ENCODE measurements at regions of chr6 and their contacts with region 1.

Region 1: DNA sequence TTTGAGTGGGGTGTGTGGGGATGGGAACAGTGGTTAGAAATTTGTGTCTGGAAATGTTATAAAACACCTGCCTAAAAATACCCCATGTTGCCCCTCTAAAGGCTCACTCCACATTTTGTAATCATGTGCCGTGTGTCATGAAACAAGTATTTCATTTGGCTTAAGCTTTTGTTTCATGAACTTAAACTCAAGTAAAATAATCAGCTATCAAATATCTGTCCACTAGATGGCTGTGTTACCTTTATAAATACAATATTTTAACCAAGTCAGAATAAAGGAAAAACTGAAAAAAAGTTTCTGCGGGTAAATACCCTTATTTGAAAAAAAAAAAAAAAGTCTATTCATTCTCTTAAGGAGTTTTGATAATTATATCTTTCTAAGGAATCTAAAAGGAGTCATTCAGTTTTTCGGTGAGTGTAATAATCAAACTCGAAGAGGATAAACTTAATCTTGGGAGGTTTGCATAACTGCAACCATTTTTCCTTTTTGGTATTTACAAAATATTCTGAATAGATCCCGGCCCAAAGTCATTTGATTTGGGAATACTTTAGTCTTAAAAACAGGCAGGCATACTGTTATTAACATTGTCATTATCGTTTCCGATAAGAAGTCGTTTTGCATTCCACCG is 29.9 kb upstream of the MTRF1L start:
- DNase-seq: no peak
- H3K4me3 ChIP-seq: no peak overlapping the region
- H3K27ac ChIP-seq: no peak overlapping the region
- H3K4me1 ChIP-seq: no peaks in the 10 kb centered on the region
- H3K27me3 ChIP-seq: no peaks in the 10 kb centered on the region
- CTCF ChIP-seq: peak in 5 of 6 experiments; percentile 17 to 54 (median 36)
- POLR2A ChIP-seq: no peak

Region 2: DNA sequence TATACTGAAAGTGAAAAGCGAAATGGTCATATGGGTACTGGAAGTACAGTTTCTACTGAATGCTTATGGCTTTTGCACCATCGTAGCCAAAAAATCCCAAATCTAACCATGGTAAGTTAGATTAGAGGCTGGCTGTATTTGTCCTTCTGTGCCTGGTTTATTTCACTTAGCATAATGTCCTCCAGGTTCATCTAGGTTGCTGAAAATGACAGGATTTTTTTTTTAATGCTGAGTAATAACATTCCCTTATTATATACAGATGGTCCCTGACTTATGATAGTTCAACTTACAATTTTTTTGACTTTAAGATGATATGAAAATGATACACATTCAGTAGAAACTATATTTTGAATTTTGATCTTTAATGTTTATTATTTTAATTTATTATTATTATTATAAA is 327.0 kb before region 1 on chr6:
- intact Hi-C with region 1: no loop called
- DNase-seq: no peak
- H3K4me3 ChIP-seq: no peak overlapping the region
- H3K27ac ChIP-seq: no peak overlapping the region
- H3K4me1 ChIP-seq: no peaks in the 10 kb centered on the region
- H3K27me3 ChIP-seq: no peaks in the 10 kb centered on the region
- CTCF ChIP-seq: no peak
- POLR2A ChIP-seq: no peak

Region 3: GRCh38 chr6:153511896-153512496 is 479.6 kb after region 1 on chr6:
- intact Hi-C with region 1: loop called in 1 of 2 experiments (anchors 10 kb)
- DNase-seq: peak in 2 of 7 donors; percentile 16 to 23
- H3K4me3 ChIP-seq: no peak overlapping the region
- H3K27ac ChIP-seq: no peak overlapping the region
- H3K4me1 ChIP-seq: no peaks in the 10 kb centered on the region
- H3K27me3 ChIP-seq: no peaks in the 10 kb centered on the region
- CTCF ChIP-seq: peak; percentile 34 to 62 (median 48)
- POLR2A ChIP-seq: no peak